ENCODE measurements at regions of chr10 and their contacts with region 1.

Region 1: GRCh38 chr10:117535298-117536071 is 7.1 kb upstream of the EMX2 start:
- DNase-seq: peak in 1 of 2 experiments; percentile 32
- H3K4me3 ChIP-seq: peak overlapping the region; percentile 50
- H3K4me3 Mint-ChIP-seq: peak overlapping the region; percentile 72
- H3K27ac Mint-ChIP-seq: no peak overlapping the region
- H3K4me1 ChIP-seq: peaks cover 21% of the 10 kb centered on the region
- H3K4me1 Mint-ChIP-seq: peaks cover 3% of the 10 kb centered on the region
- H3K27me3 ChIP-seq: no peaks in the 10 kb centered on the region
- H3K27me3 Mint-ChIP-seq: no peaks in the 10 kb centered on the region
- CTCF ChIP-seq: no peak

Region 2: GRCh38 chr10:117511601-117512390 is 23.7 kb before region 1 on chr10:
- CTCF ChIA-PET with region 1: interaction called, 10 read pairs
- POLR2A ChIA-PET with region 1: no interaction called
- intact Hi-C with region 1: no loop called
- DNase-seq: no peak
- H3K4me3 ChIP-seq: no peak overlapping the region
- H3K4me3 Mint-ChIP-seq: no peak overlapping the region
- H3K27ac Mint-ChIP-seq: no peak overlapping the region
- H3K4me1 ChIP-seq: peaks cover 19% of the 10 kb centered on the region
- H3K4me1 Mint-ChIP-seq: peaks cover 8% of the 10 kb centered on the region
- H3K27me3 ChIP-seq: no peaks in the 10 kb centered on the region
- H3K27me3 Mint-ChIP-seq: no peaks in the 10 kb centered on the region
- CTCF ChIP-seq: no peak

Region 3: DNA sequence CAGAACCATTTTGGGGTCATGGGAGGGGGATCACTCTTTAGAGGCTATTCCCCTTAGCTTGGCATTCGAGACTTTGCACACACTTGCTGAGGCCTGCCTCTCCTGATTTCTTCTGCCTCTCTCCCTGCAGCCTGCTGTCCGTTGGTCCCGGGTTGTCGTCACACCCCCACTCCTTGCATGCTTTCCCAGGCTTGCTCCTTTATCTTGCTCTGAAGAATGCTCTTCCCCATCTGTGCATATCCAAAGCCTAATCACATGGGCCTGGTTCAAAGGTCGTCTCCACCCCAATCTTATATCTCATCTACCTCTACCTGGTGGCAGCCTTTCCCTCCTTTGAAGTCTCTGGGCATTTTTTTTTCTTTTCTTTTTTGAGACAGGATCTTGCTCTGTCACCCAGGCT is 17.2 kb before region 1 on chr10:
- CTCF ChIA-PET with region 1: no interaction called
- POLR2A ChIA-PET with region 1: no interaction called
- intact Hi-C with region 1: loop called (anchors 2 kb)
- DNase-seq: peak; percentile 88 to 93
- H3K4me3 ChIP-seq: no peak overlapping the region
- H3K4me3 Mint-ChIP-seq: peak overlapping the region; percentile 49
- H3K27ac Mint-ChIP-seq: peak overlapping the region; percentile 85
- H3K4me1 ChIP-seq: peaks cover 54% of the 10 kb centered on the region
- H3K4me1 Mint-ChIP-seq: peaks cover 31% of the 10 kb centered on the region
- H3K27me3 ChIP-seq: no peaks in the 10 kb centered on the region
- H3K27me3 Mint-ChIP-seq: no peaks in the 10 kb centered on the region
- CTCF ChIP-seq: no peak

Measured in Caco-2 (cell line).